Activated CD8-positive, alpha-beta T cell treated with anti-CD3 and anti-CD28 coated beads for 36 hours (primary cell): ENCODE measurements at regions of chr1 and their contacts with region 1.

Region 1: GRCh38 chr1:30779294-30780071 is 21.9 kb upstream of the LAPTM5 start:
- DNase-seq: peak; percentile 97
- ATAC-seq: peak; percentile 89
- H3K4me3 Mint-ChIP-seq: no peak overlapping the region
- H3K27ac Mint-ChIP-seq: no peak overlapping the region
- H3K4me1 Mint-ChIP-seq: peaks cover 16% of the 10 kb centered on the region
- H3K27me3 Mint-ChIP-seq: no peaks in the 10 kb centered on the region
- CTCF ChIP-seq: peak; percentile 92

Region 2: GRCh38 chr1:30418081-30418938 is 361.2 kb before region 1 on chr1:
- CTCF ChIA-PET with region 1: no interaction called
- POLR2A ChIA-PET with region 1: no interaction called
- intact Hi-C with region 1: no loop called
- DNase-seq: no peak
- ATAC-seq: no peak
- H3K4me3 Mint-ChIP-seq: no peak overlapping the region
- H3K27ac Mint-ChIP-seq: no peak overlapping the region
- H3K4me1 Mint-ChIP-seq: no peaks in the 10 kb centered on the region
- H3K27me3 Mint-ChIP-seq: peaks cover 8% of the 10 kb centered on the region
- CTCF ChIP-seq: no peak

Region 3: DNA sequence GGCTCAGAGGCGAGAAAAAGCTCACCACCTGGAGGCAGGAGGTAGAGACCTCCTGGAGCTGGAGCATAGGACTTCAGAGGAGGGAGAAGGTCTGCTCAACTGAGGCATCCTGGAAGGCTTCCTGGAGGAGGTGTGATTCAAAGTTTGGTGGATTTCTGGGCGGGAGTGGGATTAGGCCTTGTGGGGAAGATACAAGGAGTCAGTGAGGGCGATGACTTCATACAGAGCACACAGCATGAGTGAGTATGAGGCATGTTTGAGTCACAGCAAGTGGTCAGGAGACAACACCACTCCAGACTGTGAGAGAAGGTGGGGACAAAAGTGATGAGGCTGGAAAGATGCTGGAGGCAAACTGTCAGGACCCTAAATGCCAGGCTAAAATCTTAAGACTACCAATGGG is 133.7 kb before region 1 on chr1:
- CTCF ChIA-PET with region 1: no interaction called
- POLR2A ChIA-PET with region 1: no interaction called
- intact Hi-C with region 1: no loop called
- DNase-seq: no peak
- ATAC-seq: no peak
- H3K4me3 Mint-ChIP-seq: no peak overlapping the region
- H3K27ac Mint-ChIP-seq: no peak overlapping the region
- H3K4me1 Mint-ChIP-seq: peaks cover under 1% of the 10 kb centered on the region
- H3K27me3 Mint-ChIP-seq: peaks cover 26% of the 10 kb centered on the region
- CTCF ChIP-seq: no peak

Region 4: GRCh38 chr1:30718636-30719405 is 60.7 kb before region 1 on chr1:
- CTCF ChIA-PET with region 1: interaction called, 283 read pairs
- POLR2A ChIA-PET with region 1: interaction called, 40 read pairs
- intact Hi-C with region 1: loop called (anchors 1 kb)
- DNase-seq: peak; percentile 100
- ATAC-seq: peak; percentile 70
- H3K4me3 Mint-ChIP-seq: peak overlapping the region; percentile 88
- H3K27ac Mint-ChIP-seq: peak overlapping the region; percentile 93
- H3K4me1 Mint-ChIP-seq: peaks cover 29% of the 10 kb centered on the region
- H3K27me3 Mint-ChIP-seq: no peaks in the 10 kb centered on the region
- CTCF ChIP-seq: no peak

Region 5: GRCh38 chr1:30732277-30732996 is 47.0 kb before region 1 on chr1:
- CTCF ChIA-PET with region 1: interaction called, 132 read pairs
- POLR2A ChIA-PET with region 1: interaction called, 4 read pairs
- intact Hi-C with region 1: no loop called
- DNase-seq: no peak
- ATAC-seq: peak; percentile 32
- H3K4me3 Mint-ChIP-seq: no peak overlapping the region
- H3K27ac Mint-ChIP-seq: peak overlapping the region; percentile 73
- H3K4me1 Mint-ChIP-seq: peaks cover 22% of the 10 kb centered on the region
- H3K27me3 Mint-ChIP-seq: no peaks in the 10 kb centered on the region
- CTCF ChIP-seq: no peak

Region 6: GRCh38 chr1:30756545-30757195 is 22.8 kb before region 1 on chr1:
- CTCF ChIA-PET with region 1: interaction called, 186 read pairs
- POLR2A ChIA-PET with region 1: interaction called, 4 read pairs
- intact Hi-C with region 1: no loop called
- DNase-seq: peak; percentile 88
- ATAC-seq: peak; percentile 57
- H3K4me3 Mint-ChIP-seq: peak overlapping the region; percentile 87
- H3K27ac Mint-ChIP-seq: peak overlapping the region; percentile 98
- H3K4me1 Mint-ChIP-seq: peaks cover 75% of the 10 kb centered on the region
- H3K27me3 Mint-ChIP-seq: no peaks in the 10 kb centered on the region
- CTCF ChIP-seq: no peak

Region 7: GRCh38 chr1:30911046-30911954 is 131.8 kb after region 1 on chr1:
- CTCF ChIA-PET with region 1: interaction called, 94 read pairs
- POLR2A ChIA-PET with region 1: interaction called, 3 read pairs
- intact Hi-C with region 1: no loop called
- DNase-seq: peak; percentile 80
- ATAC-seq: peak; percentile 64
- H3K4me3 Mint-ChIP-seq: no peak overlapping the region
- H3K27ac Mint-ChIP-seq: no peak overlapping the region
- H3K4me1 Mint-ChIP-seq: peaks cover 9% of the 10 kb centered on the region
- H3K27me3 Mint-ChIP-seq: peaks cover 32% of the 10 kb centered on the region
- CTCF ChIP-seq: peak; percentile 74